OCI-LY7 (cell line): ENCODE measurements at regions of chr6 and their contacts with region 1.

Region 1: DNA sequence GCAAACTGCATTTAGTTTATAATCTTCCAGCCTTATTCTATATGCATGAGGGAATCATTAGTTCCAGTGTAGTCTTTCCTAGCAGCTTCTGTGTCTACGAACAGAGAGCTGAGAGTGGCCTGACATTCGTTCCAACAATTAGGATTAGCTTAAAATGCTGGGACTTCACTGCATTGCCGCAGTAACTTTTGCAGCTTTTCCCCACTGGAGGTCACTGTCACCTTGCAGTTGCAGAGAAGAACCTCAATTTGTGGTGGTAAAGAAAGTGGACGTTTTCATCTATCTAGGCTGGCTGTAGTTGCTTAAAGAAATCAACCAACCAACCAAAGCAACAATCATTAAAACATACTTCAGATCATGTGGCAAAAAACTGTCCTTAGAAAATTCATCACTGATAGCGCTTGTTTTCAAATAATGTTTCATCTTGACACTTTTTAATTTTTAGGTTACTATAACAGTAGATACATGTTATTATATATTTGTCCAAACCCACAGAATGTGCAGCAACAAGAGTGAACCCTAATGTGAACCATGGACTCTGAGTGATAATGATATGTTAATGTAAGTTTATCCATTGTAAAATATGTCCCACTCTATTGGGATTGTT is 12.2 kb downstream of the MYLK4 start:
- DNase-seq: peak; percentile 69
- H3K4me3 ChIP-seq: no peak overlapping the region
- H3K27ac ChIP-seq: no peak overlapping the region
- H3K4me1 ChIP-seq: peaks cover 22% of the 10 kb centered on the region
- CTCF ChIP-seq: peak; percentile 95

Region 2: DNA sequence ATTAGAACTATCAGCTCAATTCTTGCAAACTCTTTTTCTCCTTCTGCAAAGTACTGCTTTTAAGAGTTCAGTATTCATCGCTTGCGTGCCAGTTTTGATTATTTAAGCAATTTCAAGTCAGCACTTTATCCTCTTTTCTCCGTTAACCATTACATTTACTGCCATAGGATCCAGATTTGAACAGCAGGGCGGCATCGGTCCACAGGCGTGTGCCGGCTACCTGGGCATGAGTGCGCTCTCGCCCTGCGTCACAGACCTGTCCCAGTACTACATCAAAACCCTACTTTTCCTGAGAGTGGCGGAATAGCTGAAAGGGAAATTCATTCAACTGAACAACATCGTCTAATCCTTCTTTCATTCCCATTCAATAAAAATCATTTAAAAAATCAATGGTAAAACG is 41.2 kb before region 1 on chr6:
- CTCF ChIA-PET with region 1: no interaction called
- POLR2A ChIA-PET with region 1: no interaction called
- intact Hi-C with region 1: loop called (anchors 1 kb)
- DNase-seq: no peak
- H3K4me3 ChIP-seq: no peak overlapping the region
- H3K27ac ChIP-seq: no peak overlapping the region
- H3K4me1 ChIP-seq: no peaks in the 10 kb centered on the region
- CTCF ChIP-seq: peak; percentile 42; the same call in 1 of the 2 replicates

Region 3: GRCh38 chr6:2749969-2750600 is 11.6 kb after region 1 on chr6:
- CTCF ChIA-PET with region 1: interaction called, 5 read pairs
- POLR2A ChIA-PET with region 1: interaction called, 5 read pairs
- intact Hi-C with region 1: loop called (anchors 2 kb)
- DNase-seq: peak; percentile 73
- H3K4me3 ChIP-seq: no peak overlapping the region
- H3K27ac ChIP-seq: no peak overlapping the region
- H3K4me1 ChIP-seq: peaks cover 3% of the 10 kb centered on the region
- CTCF ChIP-seq: peak; percentile 99

Region 4: GRCh38 chr6:2773450-2773849 is 35.0 kb after region 1 on chr6:
- CTCF ChIA-PET with region 1: no interaction called
- POLR2A ChIA-PET with region 1: no interaction called
- intact Hi-C with region 1: no loop called
- DNase-seq: no peak
- H3K4me3 ChIP-seq: no peak overlapping the region
- H3K27ac ChIP-seq: no peak overlapping the region
- H3K4me1 ChIP-seq: peaks cover 7% of the 10 kb centered on the region
- CTCF ChIP-seq: no peak